K562 (cell line): ENCODE measurements at regions of chr11 and their contacts with region 1.

Region 1: DNA sequence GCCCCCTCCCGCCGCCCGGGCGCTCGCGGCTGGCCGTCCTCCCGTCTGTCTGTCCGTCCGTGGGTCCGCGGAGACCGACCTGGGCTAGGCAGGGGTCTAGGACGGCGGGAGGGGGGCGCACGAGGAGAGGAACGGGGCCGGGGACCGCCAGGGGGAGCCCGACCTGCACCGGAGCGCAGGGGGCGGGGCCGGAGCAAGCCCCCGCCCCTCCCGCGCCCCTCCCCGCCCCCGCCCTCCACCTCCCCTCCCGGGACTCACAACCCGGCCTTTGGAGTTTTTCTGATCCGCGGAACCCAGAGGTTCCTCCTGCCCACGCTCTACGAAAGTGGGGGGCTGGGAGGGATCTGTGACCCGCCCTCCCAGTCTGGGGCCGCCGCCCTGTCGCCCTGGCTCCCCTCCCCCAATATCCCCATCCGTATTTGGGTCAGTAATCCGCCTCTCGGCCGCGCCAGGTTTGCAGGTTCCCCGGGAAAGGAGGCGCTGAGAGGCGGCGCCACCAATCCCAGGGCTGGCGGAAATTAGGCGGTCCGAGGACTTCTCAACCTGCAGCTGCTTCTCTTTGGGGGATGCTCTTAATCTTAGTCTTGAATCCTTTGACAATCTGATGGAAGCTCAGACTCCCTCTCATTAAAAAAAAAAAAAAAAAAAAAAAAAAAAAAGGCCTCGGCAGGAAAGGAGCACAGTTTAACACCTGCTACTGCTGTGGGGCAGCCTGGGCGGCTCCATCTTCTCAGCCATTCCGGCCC is 925 bp upstream of the KCNJ11 start:
- DNase-seq: peak; percentile 76 to 96 (median 95)
- ATAC-seq: peak; percentile 74
- H3K4me3 ChIP-seq: peak overlapping the region; percentile 56
- H3K27ac ChIP-seq: no peak overlapping the region
- H3K4me1 ChIP-seq: peaks cover 2 to 36% of the 10 kb centered on the region in 2 experiments; a peak in 3 of 5 replicates
- H3K27me3 ChIP-seq: peaks cover 0 to 16% of the 10 kb centered on the region in 2 experiments
- CTCF ChIP-seq: peak; percentile 38 to 80 (median 63); a peak in 5 of 6 replicates
- EP300 ChIP-seq: no peak
- POLR2A ChIP-seq: no peak
- RAD21 ChIP-seq: peak; percentile 17 to 23; a peak in 2 of 4 replicates

Region 2: GRCh38 chr11:17479284-17480214 is 90.2 kb after region 1 on chr11:
- CTCF ChIA-PET with region 1: no interaction called
- POLR2A ChIA-PET with region 1: no interaction called
- in situ Hi-C with region 1: no loop called
- intact Hi-C with region 1: loop called (anchors 1 kb)
- DNase-seq: peak; percentile 39 to 68 (median 62)
- ATAC-seq: peak; percentile 91
- H3K4me3 ChIP-seq: no peak overlapping the region
- H3K27ac ChIP-seq: no peak overlapping the region
- H3K4me1 ChIP-seq: peaks cover 0 to 8% of the 10 kb centered on the region in 2 experiments; a peak in 1 of 5 replicates
- H3K27me3 ChIP-seq: peaks cover 5 to 46% of the 10 kb centered on the region in 2 experiments; a peak in 4 of 5 replicates
- CTCF ChIP-seq: no peak
- EP300 ChIP-seq: no peak
- POLR2A ChIP-seq: no peak
- RAD21 ChIP-seq: no peak

Region 3: GRCh38 chr11:17504330-17505107 is 115.1 kb after region 1 on chr11:
- CTCF ChIA-PET with region 1: interaction called, 31 read pairs
- POLR2A ChIA-PET with region 1: no interaction called
- in situ Hi-C with region 1: no loop called
- intact Hi-C with region 1: loop called (anchors 1 kb)
- DNase-seq: peak; percentile 53 to 66 (median 63)
- ATAC-seq: peak; percentile 80
- H3K4me3 ChIP-seq: no peak overlapping the region
- H3K27ac ChIP-seq: no peak overlapping the region
- H3K4me1 ChIP-seq: no peaks in the 10 kb centered on the region
- H3K27me3 ChIP-seq: peaks cover 3 to 65% of the 10 kb centered on the region in 2 experiments; a peak in 3 of 5 replicates
- CTCF ChIP-seq: peak; percentile 76 to 77 (median 76)
- EP300 ChIP-seq: no peak
- POLR2A ChIP-seq: no peak
- RAD21 ChIP-seq: peak; percentile 76 to 78

Region 4: DNA sequence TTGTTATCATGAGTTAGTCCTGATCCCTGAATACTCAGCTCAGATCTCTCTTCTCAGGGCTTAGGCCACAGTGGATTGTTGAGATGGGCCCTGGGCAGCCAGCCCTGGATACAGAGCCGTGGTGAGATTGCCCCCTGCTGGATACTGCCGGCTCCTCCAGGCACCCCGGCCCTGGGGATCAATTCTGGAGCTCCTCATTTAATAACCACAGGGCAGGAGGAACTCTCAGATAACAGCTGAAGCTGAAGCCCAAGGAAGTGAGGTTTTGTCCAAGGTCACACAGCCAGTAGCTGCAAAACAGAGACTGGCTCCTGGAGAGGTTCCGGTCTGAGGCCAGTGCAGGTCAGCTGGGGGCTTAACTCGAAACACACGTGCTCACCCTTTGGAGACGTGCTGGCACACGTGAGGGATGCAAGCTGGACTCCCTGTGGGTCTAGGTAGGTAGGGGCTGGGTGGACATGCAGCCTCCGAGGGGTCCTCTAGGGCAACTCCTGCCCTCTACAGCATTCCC is 138.9 kb after region 1 on chr11:
- CTCF ChIA-PET with region 1: interaction called, 11 read pairs
- POLR2A ChIA-PET with region 1: no interaction called
- in situ Hi-C with region 1: loop called (anchors 10 kb)
- intact Hi-C with region 1: loop called (anchors 1 kb)
- DNase-seq: peak; percentile 77 to 88 (median 84)
- ATAC-seq: peak; percentile 98
- H3K4me3 ChIP-seq: no peak overlapping the region
- H3K27ac ChIP-seq: no peak overlapping the region
- H3K4me1 ChIP-seq: peaks cover 0 to 5% of the 10 kb centered on the region in 2 experiments; a peak in 3 of 5 replicates
- H3K27me3 ChIP-seq: peaks cover 21 to 70% of the 10 kb centered on the region in 2 experiments; a peak in 4 of 5 replicates
- CTCF ChIP-seq: peak; percentile 88 to 92 (median 89)
- EP300 ChIP-seq: no peak
- POLR2A ChIP-seq: no peak
- RAD21 ChIP-seq: peak; percentile 89